B cell (primary cell): ENCODE measurements at regions of chr16 and their contacts with region 1.

Region 1: DNA sequence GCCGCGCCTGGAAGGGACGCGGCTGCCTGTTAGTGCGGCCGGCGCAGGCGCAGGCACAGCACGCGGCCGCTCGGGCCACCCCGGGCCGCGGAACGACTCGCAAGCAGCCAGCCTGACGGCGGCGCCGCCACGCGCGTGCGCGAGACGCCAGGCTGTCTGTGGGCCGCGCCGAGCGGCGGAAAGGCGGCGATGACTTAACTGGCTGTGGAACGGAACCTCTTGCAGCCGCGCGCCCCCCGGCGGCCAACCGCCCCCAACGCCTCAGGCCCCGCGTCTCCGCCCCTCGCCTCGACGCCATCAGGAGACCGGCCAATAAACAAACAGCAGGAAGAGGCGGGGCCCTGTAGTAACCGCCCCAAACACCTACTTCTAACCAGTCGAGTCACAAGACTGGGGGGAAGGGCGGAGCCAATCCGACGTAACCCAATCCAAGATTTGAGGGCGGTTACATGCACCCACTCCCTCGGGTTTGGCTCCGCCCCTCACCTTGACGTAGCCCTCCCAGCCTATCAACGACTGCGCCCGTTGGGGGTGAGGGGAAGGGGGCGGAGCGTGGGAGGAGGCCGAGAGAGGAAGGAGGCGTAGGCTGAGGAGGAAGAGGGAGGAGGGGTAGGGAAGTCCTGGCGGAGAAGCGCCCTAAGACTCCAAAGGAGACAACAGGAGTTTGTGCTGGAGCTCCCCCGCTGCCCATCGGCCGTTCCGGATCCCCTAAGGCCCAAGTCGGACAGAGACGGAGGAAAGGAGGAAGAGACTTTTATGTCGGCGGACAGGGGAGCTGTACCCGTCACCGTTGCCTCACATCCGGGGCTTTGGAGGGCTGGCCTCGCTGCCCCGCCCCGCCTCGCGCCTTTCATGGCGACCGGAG is at the start of gene FBRS:
- DNase-seq: peak; percentile 100
- ATAC-seq: peak; percentile 76
- H3K4me3 ChIP-seq: peak within 1 kb of the TSS; percentile 49 to 90 (median 79)
- H3K4me3 Mint-ChIP-seq: peak within 1 kb of the TSS; percentile 97
- H3K27ac ChIP-seq: peak within 1 kb of the TSS; percentile 88 to 98
- H3K27ac Mint-ChIP-seq: peak within 1 kb of the TSS; percentile 100
- H3K4me1 ChIP-seq: peaks cover 30 to 44% of the 10 kb centered on the region in 2 donors
- H3K4me1 Mint-ChIP-seq: peaks cover 30% of the 10 kb centered on the region
- H3K27me3 ChIP-seq: no peaks in the 10 kb centered on the region
- H3K27me3 Mint-ChIP-seq: no peaks in the 10 kb centered on the region
- CTCF ChIP-seq: peak; percentile 81
- total RNA-seq, gene FBRS: 191 and 194 TPM in 2 replicates

Region 2: DNA sequence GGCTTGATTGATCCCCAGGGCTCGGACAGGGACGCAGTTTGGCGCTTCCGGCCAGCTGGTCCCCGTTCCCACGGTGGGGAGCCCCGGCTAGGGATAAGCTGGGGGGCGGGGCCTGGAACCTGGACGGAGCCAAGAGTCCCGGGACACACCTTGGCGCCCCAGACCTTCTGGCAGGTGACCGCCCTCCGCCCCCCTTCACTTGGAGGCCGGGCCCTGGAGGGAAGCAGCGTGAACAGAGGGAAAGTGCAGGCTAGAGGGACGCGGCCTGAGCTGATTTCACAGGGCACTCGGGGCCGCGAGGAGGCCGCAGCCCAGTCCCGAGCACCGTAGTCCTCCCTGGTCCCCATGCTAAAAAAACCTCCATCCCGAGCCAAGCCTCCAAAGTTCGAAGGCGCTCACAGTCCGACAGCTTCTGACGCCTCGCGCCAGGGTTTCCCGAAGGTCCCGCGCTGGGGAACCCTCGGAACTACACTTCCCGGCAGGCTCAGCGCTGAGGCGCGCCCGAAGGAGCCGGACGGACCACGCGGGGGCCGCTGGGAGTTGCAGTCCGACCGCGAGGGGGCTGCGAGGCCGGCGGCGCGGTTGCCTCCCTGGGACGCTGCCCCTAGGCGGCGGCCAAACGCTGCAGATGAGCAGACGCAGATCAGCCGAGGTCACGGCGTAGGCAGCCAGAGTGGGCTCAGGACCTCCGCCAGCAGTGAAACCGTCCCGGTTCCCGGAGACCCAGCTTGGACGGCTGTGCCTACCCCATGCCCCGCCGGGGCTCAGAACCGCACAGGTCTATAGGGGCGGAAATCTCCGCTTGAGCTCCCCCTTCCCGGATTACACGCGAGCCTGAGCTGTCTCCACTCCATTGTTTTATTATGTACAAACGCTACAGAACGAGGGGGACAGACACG is 566.4 kb before region 1 on chr16 and contains the start of gene TBX6:
- CTCF ChIA-PET with region 1: interaction called, 5 read pairs
- POLR2A ChIA-PET with region 1: no interaction called
- intact Hi-C with region 1: loop called (anchors 1 kb)
- DNase-seq: peak; percentile 95
- ATAC-seq: peak; percentile 74
- H3K4me3 ChIP-seq: peak within 1 kb of the TSS; percentile 52 to 77 (median 70)
- H3K4me3 Mint-ChIP-seq: peak within 1 kb of the TSS; percentile 92
- H3K27ac ChIP-seq: peak within 1 kb of the TSS; percentile 87 to 92
- H3K27ac Mint-ChIP-seq: peak within 1 kb of the TSS; percentile 98
- H3K4me1 ChIP-seq: peaks cover 33 to 62% of the 10 kb centered on the region in 2 donors
- H3K4me1 Mint-ChIP-seq: peaks cover 53% of the 10 kb centered on the region
- H3K27me3 ChIP-seq: no peaks in the 10 kb centered on the region
- H3K27me3 Mint-ChIP-seq: no peaks in the 10 kb centered on the region
- CTCF ChIP-seq: peak; percentile 76
- total RNA-seq, gene TBX6: 5.4 and 6.1 TPM in 2 replicates

Region 3: DNA sequence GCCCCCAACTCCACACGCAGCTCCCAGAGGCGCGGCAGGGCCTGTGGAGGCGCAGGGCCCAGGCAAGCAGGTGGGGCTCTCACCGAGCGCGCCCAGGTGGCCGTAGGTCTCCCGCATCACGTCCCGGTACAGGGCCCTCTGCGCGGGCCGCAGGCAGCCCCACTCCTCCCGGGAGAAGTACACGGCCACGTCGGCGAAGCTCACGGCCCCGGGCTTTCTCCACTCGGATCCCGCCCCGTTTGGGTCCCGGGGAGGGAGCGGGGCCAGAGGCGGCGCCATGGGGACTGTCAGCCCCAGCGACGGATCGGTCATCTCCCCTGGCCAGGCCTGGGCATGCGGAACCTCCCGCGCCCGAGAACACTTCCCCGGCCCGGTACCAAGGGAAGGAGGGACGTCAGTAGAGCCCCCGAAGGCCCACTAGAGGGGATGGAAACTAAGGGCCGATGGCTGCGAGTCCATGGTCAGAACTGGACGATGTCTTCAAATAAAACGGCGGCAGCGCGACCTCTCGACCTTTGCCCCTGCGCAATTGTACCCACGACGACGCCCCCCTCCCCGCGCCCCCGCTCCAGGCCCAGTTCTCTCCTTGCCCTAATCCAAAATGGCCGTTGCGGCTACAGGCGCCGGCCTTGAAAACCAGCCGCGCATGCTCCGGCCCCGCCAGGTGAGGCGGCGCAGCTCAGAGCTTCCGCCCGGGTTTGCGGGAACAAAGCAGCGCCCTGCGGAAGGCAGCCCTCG is 123.6 kb before region 1 on chr16 and contains the start of gene ZNF747:
- CTCF ChIA-PET with region 1: no interaction called
- POLR2A ChIA-PET with region 1: no interaction called
- intact Hi-C with region 1: loop called (anchors 2 kb)
- DNase-seq: peak; percentile 93
- ATAC-seq: peak; percentile 82
- H3K4me3 ChIP-seq: peak within 1 kb of the TSS; percentile 80 to 93 (median 88)
- H3K4me3 Mint-ChIP-seq: peak within 1 kb of the TSS; percentile 98
- H3K27ac ChIP-seq: peak within 1 kb of the TSS; percentile 89 to 94
- H3K27ac Mint-ChIP-seq: peak within 1 kb of the TSS; percentile 94
- H3K4me1 ChIP-seq: peaks cover 8 to 23% of the 10 kb centered on the region in 2 donors
- H3K4me1 Mint-ChIP-seq: peaks cover 33% of the 10 kb centered on the region
- H3K27me3 ChIP-seq: no peaks in the 10 kb centered on the region
- H3K27me3 Mint-ChIP-seq: no peaks in the 10 kb centered on the region
- CTCF ChIP-seq: no peak
- total RNA-seq, gene ZNF747: 17.3 and 27.1 TPM in 2 replicates

Region 4: GRCh38 chr16:30628627-30629540 is 29.2 kb before region 1 on chr16:
- CTCF ChIA-PET with region 1: interaction called, 14 read pairs
- POLR2A ChIA-PET with region 1: interaction called, 10 read pairs
- intact Hi-C with region 1: loop called (anchors 1 kb)
- DNase-seq: peak; percentile 85
- ATAC-seq: peak; percentile 93
- H3K4me3 ChIP-seq: peak overlapping the region in 3 of 5 experiments; percentile 8 to 37 (median 28)
- H3K4me3 Mint-ChIP-seq: peak overlapping the region; percentile 68
- H3K27ac ChIP-seq: no peak overlapping the region
- H3K27ac Mint-ChIP-seq: peak overlapping the region; percentile 78
- H3K4me1 ChIP-seq: peaks cover 0 to 15% of the 10 kb centered on the region in 2 donors
- H3K4me1 Mint-ChIP-seq: peaks cover 8% of the 10 kb centered on the region
- H3K27me3 ChIP-seq: no peaks in the 10 kb centered on the region
- H3K27me3 Mint-ChIP-seq: peaks cover 1% of the 10 kb centered on the region
- CTCF ChIP-seq: peak; percentile 95

Region 5: GRCh38 chr16:30736996-30737793 is 79.1 kb after region 1 on chr16:
- CTCF ChIA-PET with region 1: no interaction called
- POLR2A ChIA-PET with region 1: no interaction called
- intact Hi-C with region 1: no loop called
- DNase-seq: no peak
- ATAC-seq: no peak
- H3K4me3 ChIP-seq: no peak overlapping the region
- H3K4me3 Mint-ChIP-seq: no peak overlapping the region
- H3K27ac ChIP-seq: no peak overlapping the region
- H3K27ac Mint-ChIP-seq: no peak overlapping the region
- H3K4me1 ChIP-seq: no peaks in the 10 kb centered on the region
- H3K4me1 Mint-ChIP-seq: peaks cover 5% of the 10 kb centered on the region
- H3K27me3 ChIP-seq: no peaks in the 10 kb centered on the region
- H3K27me3 Mint-ChIP-seq: no peaks in the 10 kb centered on the region
- CTCF ChIP-seq: no peak

Region 6: GRCh38 chr16:30747799-30748634 is 89.9 kb after region 1 on chr16 and contains the start of gene PHKG2:
- CTCF ChIA-PET with region 1: no interaction called
- POLR2A ChIA-PET with region 1: no interaction called
- intact Hi-C with region 1: loop called (anchors 1 kb)
- DNase-seq: peak; percentile 98
- ATAC-seq: peak; percentile 99
- H3K4me3 ChIP-seq: peak within 1 kb of the TSS; percentile 22 to 84 (median 69)
- H3K4me3 Mint-ChIP-seq: peak within 1 kb of the TSS; percentile 92
- H3K27ac ChIP-seq: peak within 1 kb of the TSS; percentile 45 to 75
- H3K27ac Mint-ChIP-seq: peak within 1 kb of the TSS; percentile 93
- H3K4me1 ChIP-seq: peaks cover 3 to 5% of the 10 kb centered on the region in 2 donors
- H3K4me1 Mint-ChIP-seq: peaks cover 19% of the 10 kb centered on the region
- H3K27me3 ChIP-seq: no peaks in the 10 kb centered on the region
- H3K27me3 Mint-ChIP-seq: no peaks in the 10 kb centered on the region
- CTCF ChIP-seq: no peak
- total RNA-seq, gene PHKG2: 54.1 and 55.7 TPM in 2 replicates